ENCODE measurements at regions of chr14 and their contacts with region 1.

Region 1: DNA sequence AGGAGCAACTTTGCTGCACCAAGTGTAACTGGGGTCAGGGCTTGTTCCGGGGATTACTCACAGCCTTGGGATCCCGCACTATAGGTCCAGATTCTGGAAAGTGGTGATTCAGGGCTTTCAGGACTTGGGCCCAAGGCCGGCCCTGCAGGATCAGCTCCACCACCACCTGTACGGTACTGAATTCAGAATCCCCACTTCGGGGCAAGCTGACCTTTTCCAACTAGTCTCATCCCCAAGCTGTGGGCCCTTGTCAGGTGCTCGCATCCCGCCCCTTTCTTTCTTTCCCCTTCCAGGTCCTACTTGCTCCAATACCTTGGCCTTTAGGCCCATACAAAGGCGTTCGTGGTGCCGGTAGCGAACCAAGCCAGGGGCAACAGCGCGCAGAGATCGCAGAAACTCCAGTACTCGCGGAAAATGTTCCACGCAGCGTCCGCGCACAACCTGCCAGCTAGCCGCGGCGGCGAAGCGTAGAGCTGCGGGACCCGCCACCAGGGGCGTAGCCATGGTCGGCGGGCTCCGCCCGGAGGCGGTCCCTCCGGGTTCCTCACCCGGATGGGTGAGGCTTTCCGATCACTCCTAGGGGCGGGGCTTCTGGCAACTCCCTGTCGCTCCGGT is 487 bp downstream of the TINF2 start:
- DNase-seq: peak; percentile 93

Region 2: GRCh38 chr14:23446291-23446851 is 795.6 kb before region 1 on chr14:
- CTCF ChIA-PET with region 1: no interaction called
- POLR2A ChIA-PET with region 1: no interaction called
- DNase-seq: peak; percentile 2

Region 3: GRCh38 chr14:24080888-24081738 is 160.8 kb before region 1 on chr14:
- CTCF ChIA-PET with region 1: no interaction called
- POLR2A ChIA-PET with region 1: no interaction called
- DNase-seq: peak; percentile 62

Region 4: GRCh38 chr14:24188251-24189058 is 53.5 kb before region 1 on chr14 and contains the start of gene IPO4:
- CTCF ChIA-PET with region 1: no interaction called
- POLR2A ChIA-PET with region 1: interaction called, 11 read pairs
- DNase-seq: peak; percentile 98

Region 5: GRCh38 chr14:24212924-24213865 is 28.7 kb before region 1 on chr14 and contains the start of gene CHMP4A:
- CTCF ChIA-PET with region 1: interaction called, 3 read pairs
- POLR2A ChIA-PET with region 1: interaction called, 17 read pairs
- DNase-seq: peak; percentile 96

Region 6: GRCh38 chr14:24271134-24271833 is 29.3 kb after region 1 on chr14 and contains the start of gene RABGGTA:
- CTCF ChIA-PET with region 1: interaction called, 6 read pairs
- POLR2A ChIA-PET with region 1: interaction called, 52 read pairs
- DNase-seq: peak; percentile 94

Region 7: GRCh38 chr14:24292118-24292807 is 50.3 kb after region 1 on chr14:
- CTCF ChIA-PET with region 1: interaction called, 69 read pairs
- POLR2A ChIA-PET with region 1: interaction called, 139 read pairs
- DNase-seq: no peak

Region 8: GRCh38 chr14:24299255-24300195 is 57.6 kb after region 1 on chr14 and contains the starts of genes DHRS1 and NOP9:
- CTCF ChIA-PET with region 1: interaction called, 69 read pairs
- POLR2A ChIA-PET with region 1: interaction called, 139 read pairs
- DNase-seq: peak; percentile 95

Region 9: GRCh38 chr14:24307575-24308341 is 65.8 kb after region 1 on chr14 and contains the start of gene CIDEB:
- CTCF ChIA-PET with region 1: interaction called, 51 read pairs
- POLR2A ChIA-PET with region 1: interaction called, 139 read pairs
- DNase-seq: peak; percentile 78